Stomach (tissue), 19 donors: ENCODE measurements at regions of chr3 and their contacts with region 1.

Region 1: GRCh38 chr3:50370594-50370993 is 11.3 kb upstream of the TMEM115 start:
- DNase-seq: peak in 1 of 2 donors; percentile 78
- H3K4me3 ChIP-seq: no peak overlapping the region
- H3K27ac ChIP-seq: no peak overlapping the region
- H3K4me1 ChIP-seq: peaks cover 0 to 24% (median 5%) of the 10 kb centered on the region in 4 donors
- H3K27me3 ChIP-seq: peaks cover 0 to 6% (median 0%) of the 10 kb centered on the region in 3 donors
- CTCF ChIP-seq: no peak
- EP300 ChIP-seq: no peak
- POLR2A ChIP-seq: no peak

Region 2: GRCh38 chr3:50530001-50530970 is 159.7 kb after region 1 on chr3:
- intact Hi-C with region 1: loop called (anchors 10 kb)
- DNase-seq: no peak
- H3K4me3 ChIP-seq: peak overlapping the region in 2 of 4 donors; percentile 15 to 22
- H3K27ac ChIP-seq: no peak overlapping the region
- H3K4me1 ChIP-seq: no peaks in the 10 kb centered on the region
- H3K27me3 ChIP-seq: peaks cover 0 to 27% (median 6%) of the 10 kb centered on the region in 3 donors
- CTCF ChIP-seq: no peak
- EP300 ChIP-seq: no peak
- POLR2A ChIP-seq: no peak